ENCODE measurements at regions of chr14 and their contacts with region 1.

Region 1: GRCh38 chr14:23903442-23903841 is 50.1 kb upstream of the DHRS4 start:
- DNase-seq: no peak
- H3K4me3 ChIP-seq: no peak overlapping the region
- H3K27ac ChIP-seq: no peak overlapping the region
- H3K4me1 ChIP-seq: no peaks in the 10 kb centered on the region
- H3K27me3 ChIP-seq: no peaks in the 10 kb centered on the region
- CTCF ChIP-seq: no peak
- EP300 ChIP-seq: no peak
- POLR2A ChIP-seq: no peak

Region 2: DNA sequence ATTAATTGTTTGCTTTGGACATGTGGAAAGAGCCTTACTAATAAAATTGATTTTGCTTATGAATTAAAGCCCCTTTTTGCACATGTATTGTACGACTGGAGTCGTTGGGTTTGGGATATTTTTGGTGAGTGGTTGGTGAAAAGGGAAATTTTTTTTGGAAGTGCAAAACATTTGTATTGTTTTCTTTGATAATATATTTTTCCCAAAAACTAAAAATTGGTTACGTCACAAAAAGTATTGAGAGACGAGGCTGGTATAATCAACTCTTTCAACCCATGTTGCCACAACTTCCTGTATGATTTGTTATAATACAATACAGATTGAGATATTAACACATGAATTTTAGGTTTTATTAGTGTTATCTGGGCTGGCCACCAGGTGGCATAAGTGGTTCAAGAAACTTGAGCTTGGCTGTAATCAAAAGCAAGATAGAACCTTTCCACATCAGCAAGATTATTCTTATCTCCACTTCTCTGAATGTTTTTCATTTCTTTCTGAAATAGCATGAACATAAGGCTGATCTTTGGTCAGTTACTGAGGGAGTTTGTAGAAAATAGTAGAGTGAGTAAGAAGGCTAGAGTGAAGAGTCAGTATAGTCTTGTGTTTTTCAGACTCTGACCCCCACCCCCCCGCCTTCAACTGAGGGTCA is 425.2 kb before region 1 on chr14:
- intact Hi-C with region 1: no loop called
- DNase-seq: peak; percentile 41 to 65 (median 62)
- H3K4me3 ChIP-seq: no peak overlapping the region
- H3K27ac ChIP-seq: no peak overlapping the region
- H3K4me1 ChIP-seq: no peaks in the 10 kb centered on the region
- H3K27me3 ChIP-seq: no peaks in the 10 kb centered on the region
- CTCF ChIP-seq: peak; percentile 40 to 87 (median 64)
- EP300 ChIP-seq: no peak
- POLR2A ChIP-seq: no peak

Region 3: DNA sequence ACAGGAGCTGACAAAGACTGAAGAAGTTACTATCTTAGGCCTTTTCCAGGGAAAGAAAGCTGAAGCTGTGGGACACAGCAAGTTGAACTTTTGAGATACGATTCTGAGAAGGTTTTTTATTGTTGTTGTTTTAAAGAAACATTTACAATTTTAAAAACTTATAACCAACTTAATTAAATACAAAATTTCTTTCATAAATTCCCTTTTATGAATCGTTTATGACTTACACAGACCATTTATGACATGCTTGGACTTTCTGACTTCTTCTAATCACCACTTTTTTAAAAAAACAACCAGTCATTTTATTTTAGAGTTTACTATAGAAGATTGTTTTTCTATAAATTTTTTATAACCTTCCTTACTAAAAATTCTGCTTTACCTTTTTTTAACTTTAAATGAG is 198.6 kb before region 1 on chr14:
- intact Hi-C with region 1: no loop called
- DNase-seq: no peak
- H3K4me3 ChIP-seq: no peak overlapping the region
- H3K27ac ChIP-seq: no peak overlapping the region
- H3K4me1 ChIP-seq: peaks cover 10% of the 10 kb centered on the region
- H3K27me3 ChIP-seq: no peaks in the 10 kb centered on the region
- CTCF ChIP-seq: no peak
- EP300 ChIP-seq: no peak
- POLR2A ChIP-seq: no peak

Region 4: GRCh38 chr14:23942387-23942986 is 39.0 kb after region 1 on chr14:
- intact Hi-C with region 1: loop called in 1 of 4 experiments (anchors 1 kb)
- DNase-seq: no peak
- H3K4me3 ChIP-seq: no peak overlapping the region
- H3K27ac ChIP-seq: no peak overlapping the region
- H3K4me1 ChIP-seq: no peaks in the 10 kb centered on the region
- H3K27me3 ChIP-seq: no peaks in the 10 kb centered on the region
- CTCF ChIP-seq: no peak
- EP300 ChIP-seq: no peak
- POLR2A ChIP-seq: no peak

Measured in ovary (tissue), 10 donors.